Endothelial cell of umbilical vein (primary cell): ENCODE measurements at regions of chr3 and their contacts with region 1.

Region 1: DNA sequence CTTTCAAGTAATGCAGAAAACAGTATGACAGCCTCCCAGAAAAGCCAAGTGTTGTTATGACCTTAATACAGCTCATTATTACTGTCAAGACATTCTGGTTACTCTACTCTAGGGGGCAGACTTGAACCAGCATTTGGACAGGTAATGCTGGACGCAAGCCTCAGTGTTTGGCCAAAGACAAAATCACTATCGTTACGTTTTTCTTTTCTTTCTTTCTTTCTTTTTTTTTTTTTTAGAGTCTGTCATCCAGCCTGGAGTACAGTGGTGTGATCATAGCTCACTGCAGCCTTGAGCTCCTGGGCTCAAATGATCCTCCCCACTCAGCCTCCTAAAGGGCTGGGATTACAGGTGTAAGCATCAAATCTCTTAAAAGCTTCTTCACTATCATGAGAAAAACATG is 29.4 kb upstream of the TMEM45A start:
- DNase-seq: peak; percentile 52
- H3K4me3 ChIP-seq: no peak overlapping the region
- H3K27ac ChIP-seq: no peak overlapping the region
- H3K4me1 ChIP-seq: no peaks in the 10 kb centered on the region
- H3K27me3 ChIP-seq: peaks cover 3 to 5% of the 10 kb centered on the region in 2 experiments
- CTCF ChIP-seq: peak; percentile 55 to 68
- POLR2A ChIP-seq: no peak

Region 2: GRCh38 chr3:99620077-99620767 is 842.8 kb before region 1 on chr3:
- CTCF ChIA-PET with region 1: no interaction called
- POLR2A ChIA-PET with region 1: no interaction called
- dilution Hi-C with region 1: no loop called
- intact Hi-C with region 1: no loop called
- DNase-seq: no peak
- H3K4me3 ChIP-seq: no peak overlapping the region
- H3K27ac ChIP-seq: no peak overlapping the region
- H3K4me1 ChIP-seq: peaks cover 11% of the 10 kb centered on the region
- H3K27me3 ChIP-seq: no peaks in the 10 kb centered on the region
- CTCF ChIP-seq: no peak
- POLR2A ChIP-seq: no peak

Region 3: GRCh38 chr3:99833617-99834205 is 629.3 kb before region 1 on chr3:
- CTCF ChIA-PET with region 1: interaction called, 24 read pairs
- POLR2A ChIA-PET with region 1: no interaction called
- dilution Hi-C with region 1: no loop called
- intact Hi-C with region 1: loop called (anchors 5 kb)
- DNase-seq: peak; percentile 87
- H3K4me3 ChIP-seq: no peak overlapping the region
- H3K27ac ChIP-seq: no peak overlapping the region
- H3K4me1 ChIP-seq: peaks cover 23% of the 10 kb centered on the region
- H3K27me3 ChIP-seq: no peaks in the 10 kb centered on the region
- CTCF ChIP-seq: no peak
- POLR2A ChIP-seq: no peak

Region 4: DNA sequence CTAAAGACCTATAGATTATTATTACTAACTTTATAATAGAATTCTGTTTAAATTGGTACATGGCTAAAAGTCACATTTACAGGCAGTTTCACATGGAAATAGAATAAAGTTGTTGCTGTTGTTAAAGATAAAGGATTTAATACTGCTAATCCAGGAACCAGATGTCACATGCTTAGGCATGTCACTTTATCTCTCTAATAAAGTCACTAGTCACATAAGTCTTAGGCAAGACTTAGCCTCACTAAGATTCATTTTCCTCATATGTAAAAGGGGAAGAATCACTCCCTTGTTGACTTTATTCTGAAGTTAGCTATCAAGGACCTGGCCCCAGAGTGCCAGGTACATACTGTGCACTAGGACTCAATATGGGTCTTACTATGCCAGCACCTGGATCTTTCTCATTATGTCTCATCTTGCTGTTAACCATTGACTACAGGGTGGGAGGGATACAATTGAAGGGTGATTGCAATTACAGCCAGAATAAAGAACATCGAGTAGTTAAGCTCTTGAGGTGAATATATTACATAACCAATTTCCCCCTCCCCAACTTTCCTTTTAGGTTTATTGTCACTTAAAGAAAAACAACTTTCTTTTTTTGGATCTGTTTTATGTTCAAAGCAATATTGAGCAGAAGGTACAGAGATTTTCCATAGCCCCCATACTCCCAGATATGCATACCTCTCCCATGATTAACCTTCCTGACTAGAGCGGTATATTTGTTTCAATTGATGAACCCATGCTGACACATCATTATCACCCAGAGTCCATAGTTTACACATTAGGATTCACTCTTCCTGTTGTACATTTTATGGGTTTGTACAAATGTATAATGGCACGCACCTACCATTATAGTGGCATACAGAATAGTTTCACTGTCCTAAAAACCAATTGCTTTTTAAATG is 25.0 kb before region 1 on chr3:
- CTCF ChIA-PET with region 1: interaction called, 11 read pairs
- POLR2A ChIA-PET with region 1: no interaction called
- dilution Hi-C with region 1: no loop called
- intact Hi-C with region 1: no loop called
- DNase-seq: no peak
- H3K4me3 ChIP-seq: no peak overlapping the region
- H3K27ac ChIP-seq: no peak overlapping the region
- H3K4me1 ChIP-seq: no peaks in the 10 kb centered on the region
- H3K27me3 ChIP-seq: no peaks in the 10 kb centered on the region
- CTCF ChIP-seq: no peak
- POLR2A ChIP-seq: no peak

Region 5: DNA sequence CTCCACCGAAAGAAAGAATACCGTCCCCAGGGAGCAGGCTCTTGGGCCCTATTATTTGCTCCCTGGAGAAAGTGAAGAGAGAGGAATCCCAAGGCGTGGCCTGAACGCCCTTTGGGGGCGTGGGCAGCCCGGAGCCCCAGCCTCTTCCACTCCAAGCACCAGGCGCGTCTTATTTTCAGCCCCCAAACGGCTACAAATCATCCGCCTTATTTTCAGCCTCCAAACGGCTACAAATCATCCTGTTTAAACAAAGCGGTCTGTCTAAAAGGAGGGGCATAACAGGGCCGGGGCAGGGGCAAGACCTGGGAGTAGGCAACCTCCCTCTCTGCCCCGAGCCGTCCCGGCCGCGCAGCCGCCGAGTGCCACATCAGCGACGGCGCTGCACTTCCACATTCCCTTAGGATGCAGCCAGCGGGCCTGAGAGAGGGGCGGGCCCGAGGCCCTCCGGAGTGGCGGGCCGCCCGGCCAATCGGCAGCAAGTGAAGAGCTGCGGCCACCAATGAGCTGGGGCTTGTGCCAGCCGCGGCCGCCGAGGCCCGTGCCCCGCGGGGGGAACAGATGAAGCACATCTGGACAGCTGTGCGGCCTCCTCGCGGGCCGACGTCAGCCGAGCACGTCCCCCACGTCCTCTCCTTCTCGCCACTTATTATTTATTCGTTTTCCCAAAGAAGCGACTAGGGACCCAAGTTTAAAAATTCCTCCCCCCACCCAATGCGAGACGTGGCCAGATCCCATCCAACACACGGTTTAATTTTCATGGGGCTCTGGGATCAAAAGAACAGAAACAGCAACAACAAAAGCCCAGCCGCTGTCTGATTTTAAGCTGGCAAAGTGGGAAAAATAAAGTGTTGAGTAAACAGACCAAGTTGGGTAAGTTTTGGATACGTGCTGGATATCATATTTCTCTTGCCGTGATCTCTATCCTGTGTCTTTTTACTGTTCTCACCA is 29.3 kb after region 1 on chr3 and contains the start of gene TMEM45A:
- CTCF ChIA-PET with region 1: interaction called, 16 read pairs
- POLR2A ChIA-PET with region 1: no interaction called
- dilution Hi-C with region 1: no loop called
- intact Hi-C with region 1: no loop called
- DNase-seq: peak; percentile 97
- H3K4me3 ChIP-seq: peak within 1 kb of the TSS; percentile 55 to 88 (median 57)
- H3K27ac ChIP-seq: peak within 1 kb of the TSS; percentile 61
- H3K4me1 ChIP-seq: peaks cover 9% of the 10 kb centered on the region
- H3K27me3 ChIP-seq: peaks cover 0 to 3% of the 10 kb centered on the region in 2 experiments
- CTCF ChIP-seq: no peak
- POLR2A ChIP-seq: peak; percentile 66
- total RNA-seq, gene TMEM45A: 5.4 and 5.6 TPM in 2 replicates

Region 6: DNA sequence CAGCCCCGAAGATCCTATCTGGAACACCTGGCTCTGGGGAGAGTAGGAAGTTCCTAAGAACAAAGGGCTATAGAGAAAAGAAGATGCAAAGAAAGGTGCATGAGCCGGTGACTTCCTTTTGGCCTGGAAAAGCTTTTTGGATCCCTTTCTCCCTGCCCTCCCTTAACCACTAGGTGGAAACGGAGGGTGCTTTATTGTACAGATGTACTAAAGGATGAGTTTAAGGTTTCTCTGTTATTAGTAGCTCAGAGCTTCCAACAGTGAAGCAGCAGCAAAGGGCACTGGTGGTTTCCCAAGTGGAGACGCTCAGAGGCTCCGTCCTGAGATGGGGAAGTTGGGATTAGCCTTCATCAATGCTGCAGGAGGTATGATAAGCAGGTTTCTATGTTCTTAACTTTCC is 140.5 kb after region 1 on chr3:
- CTCF ChIA-PET with region 1: interaction called, 21 read pairs
- POLR2A ChIA-PET with region 1: no interaction called
- dilution Hi-C with region 1: no loop called
- intact Hi-C with region 1: no loop called
- DNase-seq: peak; percentile 13
- H3K4me3 ChIP-seq: no peak overlapping the region
- H3K27ac ChIP-seq: no peak overlapping the region
- H3K4me1 ChIP-seq: no peaks in the 10 kb centered on the region
- H3K27me3 ChIP-seq: peaks cover 2 to 7% of the 10 kb centered on the region in 2 experiments
- CTCF ChIP-seq: peak; percentile 18 to 22
- POLR2A ChIP-seq: no peak

Region 7: GRCh38 chr3:100719136-100719535 is 256.1 kb after region 1 on chr3:
- CTCF ChIA-PET with region 1: interaction called, 7 read pairs
- POLR2A ChIA-PET with region 1: no interaction called
- dilution Hi-C with region 1: no loop called
- intact Hi-C with region 1: loop called (anchors 5 kb)
- DNase-seq: no peak
- H3K4me3 ChIP-seq: no peak overlapping the region
- H3K27ac ChIP-seq: no peak overlapping the region
- H3K4me1 ChIP-seq: peaks cover 5% of the 10 kb centered on the region
- H3K27me3 ChIP-seq: no peaks in the 10 kb centered on the region
- CTCF ChIP-seq: no peak
- POLR2A ChIP-seq: no peak

Region 8: DNA sequence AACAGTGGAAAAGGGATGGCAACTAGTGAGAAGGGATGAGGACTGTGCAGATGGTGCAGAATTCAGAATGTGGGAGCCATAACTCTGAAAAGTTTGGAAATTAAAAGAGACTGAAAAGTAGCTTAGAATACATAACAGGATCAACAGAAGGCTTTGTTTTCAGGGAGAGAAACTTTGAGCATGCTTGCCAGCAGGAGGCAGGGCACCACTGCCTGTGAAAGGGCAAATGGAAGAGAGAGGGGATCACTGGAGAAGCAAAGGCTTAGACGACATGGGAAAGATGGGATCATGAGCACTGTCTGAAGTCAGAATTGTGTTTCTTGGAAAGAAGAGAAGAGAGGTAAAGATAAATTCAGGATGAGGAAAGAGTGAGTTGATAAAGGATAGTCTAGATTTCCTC is 430.6 kb after region 1 on chr3:
- CTCF ChIA-PET with region 1: interaction called, 10 read pairs
- POLR2A ChIA-PET with region 1: no interaction called
- dilution Hi-C with region 1: no loop called
- intact Hi-C with region 1: loop called (anchors 1 kb)
- DNase-seq: peak; percentile 74
- H3K4me3 ChIP-seq: no peak overlapping the region
- H3K27ac ChIP-seq: no peak overlapping the region
- H3K4me1 ChIP-seq: peaks cover 8% of the 10 kb centered on the region
- H3K27me3 ChIP-seq: no peaks in the 10 kb centered on the region
- CTCF ChIP-seq: peak; percentile 78 to 80
- POLR2A ChIP-seq: no peak